HEK293T (cell line): ENCODE measurements at regions of chr1 and their contacts with region 1.

Region 1: GRCh38 chr1:85276215-85276977 is at the start of gene BCL10:
- DNase-seq: peak; percentile 99

Region 2: DNA sequence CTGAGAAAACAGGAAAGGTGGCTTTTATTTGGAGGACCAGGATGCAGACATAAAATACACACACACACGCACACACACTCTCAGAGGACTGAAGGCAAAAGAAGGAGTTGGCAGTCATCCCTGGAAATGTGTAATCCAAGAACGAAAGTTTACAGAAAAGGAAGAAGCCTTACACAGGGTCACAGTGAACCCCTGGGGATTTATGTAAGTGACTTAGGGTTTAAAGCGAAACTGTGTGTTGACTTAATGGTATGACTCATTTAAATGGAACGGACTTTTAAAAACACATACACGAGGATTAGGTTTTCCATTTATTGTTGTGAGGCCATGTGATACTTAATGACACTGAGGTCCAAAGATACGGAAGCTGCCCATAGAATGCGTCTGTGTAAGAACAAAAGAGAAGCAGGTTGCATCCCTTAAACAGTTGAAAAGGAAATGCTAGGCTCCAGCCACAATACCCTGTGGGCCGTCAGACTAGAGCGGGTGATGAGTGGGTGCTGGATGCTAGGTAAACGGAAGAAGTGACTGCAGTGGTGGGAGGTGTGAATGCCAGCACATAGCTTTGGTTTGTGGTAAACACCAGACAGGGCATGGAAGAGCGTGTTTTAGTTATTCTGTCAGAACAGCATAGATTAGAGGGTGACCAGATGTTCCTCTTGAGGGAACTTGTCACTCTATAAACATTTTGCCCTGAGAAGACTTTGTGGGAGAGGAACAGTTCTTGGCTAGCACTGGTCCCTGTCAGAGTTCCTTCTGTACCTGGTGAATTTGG is 21.6 kb after region 1 on chr1:
- CTCF ChIA-PET with region 1: no interaction called
- POLR2A ChIA-PET with region 1: interaction called, 18 read pairs
- DNase-seq: peak; percentile 51

Region 3: GRCh38 chr1:85360730-85361493 is 84.5 kb after region 1 on chr1:
- CTCF ChIA-PET with region 1: no interaction called
- POLR2A ChIA-PET with region 1: no interaction called
- DNase-seq: no peak